ENCODE measurements at regions of chr16 and their contacts with region 1.

Region 1: DNA sequence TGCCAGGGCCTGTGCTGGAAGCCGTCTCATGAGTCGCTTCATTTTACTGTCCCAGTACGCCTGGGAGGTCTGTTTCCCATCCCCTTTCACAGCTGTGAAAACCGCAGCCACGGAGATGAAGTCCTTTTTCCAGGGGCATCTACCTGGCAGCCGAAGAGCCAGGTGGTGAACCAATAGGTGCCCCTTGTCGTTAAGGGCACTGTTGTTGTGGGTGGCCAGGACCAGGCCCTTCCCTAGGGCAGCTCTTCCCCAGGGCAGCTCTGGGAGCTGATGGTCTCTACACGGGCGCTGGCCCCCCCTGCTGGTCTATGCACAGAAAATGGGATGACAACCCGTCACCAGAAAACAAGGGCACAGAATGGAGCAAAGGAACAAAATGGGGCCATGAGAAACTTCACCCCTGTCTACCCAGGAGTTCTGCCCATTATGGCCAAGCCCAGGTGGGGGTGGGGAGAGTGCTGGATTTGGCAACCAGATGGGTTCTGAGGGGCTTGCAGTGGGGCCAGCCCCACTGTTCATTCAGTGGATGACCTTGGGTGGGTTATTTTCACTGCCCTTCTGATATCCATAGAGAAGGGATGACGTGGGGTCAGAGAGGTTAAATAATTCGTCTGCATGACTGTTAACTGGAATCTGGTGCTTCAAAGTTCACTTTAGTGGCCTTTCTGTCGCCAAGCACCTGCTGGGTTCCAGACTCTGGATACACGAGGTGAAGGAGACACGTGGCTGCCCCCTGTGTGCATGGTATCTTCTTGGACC is 11.5 kb downstream of the RMI2 start:
- DNase-seq: peak; percentile 74
- ATAC-seq: peak; percentile 35
- H3K4me3 ChIP-seq: no peak overlapping the region
- H3K4me3 Mint-ChIP-seq: peak overlapping the region; percentile 16
- H3K27ac ChIP-seq: no peak overlapping the region
- H3K27ac Mint-ChIP-seq: peak overlapping the region; percentile 37
- H3K4me1 ChIP-seq: peaks cover 42 to 45% of the 10 kb centered on the region in 2 donors
- H3K4me1 Mint-ChIP-seq: peaks cover 53% of the 10 kb centered on the region
- H3K27me3 ChIP-seq: peaks cover 0 to 45% (median 25%) of the 10 kb centered on the region in 4 experiments
- H3K27me3 Mint-ChIP-seq: peaks cover 30% of the 10 kb centered on the region
- CTCF ChIP-seq: peak; percentile 68

Region 2: DNA sequence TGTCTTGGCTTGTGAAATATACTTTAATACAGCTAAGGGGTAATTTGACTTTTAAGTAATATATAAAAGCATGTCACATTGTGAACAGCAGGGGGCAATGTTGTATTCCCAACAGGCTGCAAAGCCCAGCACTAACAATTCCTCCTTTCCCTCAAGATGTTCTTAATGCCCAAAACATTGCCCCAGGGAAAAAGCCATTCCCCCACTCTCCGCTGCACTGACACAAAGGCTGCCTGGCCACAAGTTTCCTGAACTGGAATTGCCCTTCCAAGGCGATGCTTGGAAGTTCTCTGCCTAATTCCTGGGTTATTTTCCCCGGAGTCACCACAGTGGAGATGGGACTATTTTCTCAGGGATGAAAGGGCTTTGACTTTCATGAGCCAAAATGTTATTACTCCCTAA is 385.2 kb before region 1 on chr16:
- CTCF ChIA-PET with region 1: interaction called, 47 read pairs
- POLR2A ChIA-PET with region 1: interaction called, 6 read pairs
- intact Hi-C with region 1: loop called (anchors 1 kb)
- DNase-seq: peak; percentile 64
- ATAC-seq: peak; percentile 39
- H3K4me3 ChIP-seq: no peak overlapping the region
- H3K4me3 Mint-ChIP-seq: no peak overlapping the region
- H3K27ac ChIP-seq: no peak overlapping the region
- H3K27ac Mint-ChIP-seq: no peak overlapping the region
- H3K4me1 ChIP-seq: no peaks in the 10 kb centered on the region
- H3K4me1 Mint-ChIP-seq: peaks cover 6% of the 10 kb centered on the region
- H3K27me3 ChIP-seq: no peaks in the 10 kb centered on the region
- H3K27me3 Mint-ChIP-seq: no peaks in the 10 kb centered on the region
- CTCF ChIP-seq: peak; percentile 89

Region 3: DNA sequence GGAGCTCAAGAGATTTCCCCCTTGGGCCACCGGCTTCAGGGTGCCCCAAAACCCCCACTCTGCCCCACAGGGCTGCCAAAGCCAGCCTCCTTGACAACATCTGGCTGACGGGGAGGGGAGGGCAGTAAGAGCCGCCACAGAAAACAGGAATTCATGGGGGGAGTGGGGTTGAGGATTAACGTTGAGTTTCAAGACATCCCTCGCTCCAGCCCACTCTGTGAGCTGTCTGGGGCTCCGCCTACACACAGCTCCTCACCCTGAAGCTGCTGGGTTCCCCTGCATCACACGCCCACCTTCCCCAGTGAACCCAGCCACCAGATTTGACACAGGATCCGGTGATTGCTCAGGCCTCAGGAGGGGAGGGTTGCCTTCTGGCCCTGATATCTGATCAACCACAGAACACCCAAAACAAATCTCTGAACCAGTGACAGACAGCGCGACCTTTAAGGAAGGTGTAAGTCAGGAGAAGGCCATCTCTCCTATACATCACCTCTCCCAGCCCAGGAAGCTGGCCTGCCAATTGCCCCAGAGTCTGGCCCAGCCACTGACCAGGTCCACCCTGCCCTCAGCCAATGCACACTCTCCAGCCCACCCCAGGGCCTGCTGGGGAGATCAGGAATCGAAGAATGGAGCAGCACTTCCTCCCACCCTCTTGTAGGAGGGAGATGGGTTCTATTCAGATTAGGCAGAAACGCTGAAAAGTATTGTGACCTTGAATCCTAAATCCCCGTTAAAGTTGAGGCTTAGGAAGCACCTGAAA is 280.3 kb before region 1 on chr16:
- CTCF ChIA-PET with region 1: interaction called, 6 read pairs
- POLR2A ChIA-PET with region 1: no interaction called
- intact Hi-C with region 1: loop called (anchors 10 kb)
- DNase-seq: peak; percentile 44
- ATAC-seq: peak; percentile 70
- H3K4me3 ChIP-seq: no peak overlapping the region
- H3K4me3 Mint-ChIP-seq: peak overlapping the region; percentile 81
- H3K27ac ChIP-seq: peak overlapping the region; percentile 63 to 64
- H3K27ac Mint-ChIP-seq: peak overlapping the region; percentile 97
- H3K4me1 ChIP-seq: peaks cover 53 to 57% of the 10 kb centered on the region in 2 donors
- H3K4me1 Mint-ChIP-seq: peaks cover 77% of the 10 kb centered on the region
- H3K27me3 ChIP-seq: no peaks in the 10 kb centered on the region
- H3K27me3 Mint-ChIP-seq: no peaks in the 10 kb centered on the region
- CTCF ChIP-seq: no peak

Region 4: DNA sequence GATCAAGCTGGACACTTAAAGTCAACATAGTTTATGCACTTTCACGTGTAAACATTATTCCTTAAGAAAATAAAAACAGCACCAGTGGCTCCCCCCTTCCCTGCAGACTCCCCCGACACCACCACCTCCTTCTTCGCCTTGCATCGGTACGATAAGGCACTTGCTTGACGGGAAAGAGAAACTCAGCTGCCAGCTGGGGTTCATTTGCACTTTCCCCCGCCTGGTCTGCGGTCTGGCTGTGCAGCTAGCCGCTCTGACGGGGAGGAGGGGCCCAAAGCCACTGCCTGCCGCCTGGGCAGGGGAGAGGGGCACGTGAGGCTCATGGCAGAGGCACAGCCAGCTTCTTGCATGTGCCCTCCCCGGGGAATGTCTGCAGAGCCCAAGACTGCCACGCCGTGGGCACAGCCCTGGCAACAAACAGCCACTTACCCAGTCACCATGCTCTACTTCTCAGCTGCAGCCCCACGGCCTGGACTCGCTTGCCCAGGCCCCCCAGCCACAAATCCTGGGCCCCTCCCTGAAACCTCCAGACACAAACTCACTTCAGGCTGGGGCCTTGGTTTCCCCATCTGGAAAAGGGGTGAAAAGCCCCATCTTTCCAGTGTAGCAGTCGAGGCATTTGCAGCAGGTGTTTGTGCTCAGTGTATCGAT is 59.1 kb before region 1 on chr16:
- CTCF ChIA-PET with region 1: interaction called, 120 read pairs
- POLR2A ChIA-PET with region 1: interaction called, 15 read pairs
- intact Hi-C with region 1: loop called (anchors 1 kb)
- DNase-seq: peak; percentile 95
- ATAC-seq: peak; percentile 97
- H3K4me3 ChIP-seq: peak overlapping the region in 4 of 5 experiments; percentile 0 to 41 (median 25)
- H3K4me3 Mint-ChIP-seq: peak overlapping the region; percentile 67
- H3K27ac ChIP-seq: peak overlapping the region; percentile 67 to 73
- H3K27ac Mint-ChIP-seq: peak overlapping the region; percentile 93
- H3K4me1 ChIP-seq: peaks cover 61 to 66% of the 10 kb centered on the region in 2 donors
- H3K4me1 Mint-ChIP-seq: peaks cover 71% of the 10 kb centered on the region
- H3K27me3 ChIP-seq: peaks cover 0 to 4% (median 0%) of the 10 kb centered on the region in 4 experiments
- H3K27me3 Mint-ChIP-seq: no peaks in the 10 kb centered on the region
- CTCF ChIP-seq: peak; percentile 35

Region 5: DNA sequence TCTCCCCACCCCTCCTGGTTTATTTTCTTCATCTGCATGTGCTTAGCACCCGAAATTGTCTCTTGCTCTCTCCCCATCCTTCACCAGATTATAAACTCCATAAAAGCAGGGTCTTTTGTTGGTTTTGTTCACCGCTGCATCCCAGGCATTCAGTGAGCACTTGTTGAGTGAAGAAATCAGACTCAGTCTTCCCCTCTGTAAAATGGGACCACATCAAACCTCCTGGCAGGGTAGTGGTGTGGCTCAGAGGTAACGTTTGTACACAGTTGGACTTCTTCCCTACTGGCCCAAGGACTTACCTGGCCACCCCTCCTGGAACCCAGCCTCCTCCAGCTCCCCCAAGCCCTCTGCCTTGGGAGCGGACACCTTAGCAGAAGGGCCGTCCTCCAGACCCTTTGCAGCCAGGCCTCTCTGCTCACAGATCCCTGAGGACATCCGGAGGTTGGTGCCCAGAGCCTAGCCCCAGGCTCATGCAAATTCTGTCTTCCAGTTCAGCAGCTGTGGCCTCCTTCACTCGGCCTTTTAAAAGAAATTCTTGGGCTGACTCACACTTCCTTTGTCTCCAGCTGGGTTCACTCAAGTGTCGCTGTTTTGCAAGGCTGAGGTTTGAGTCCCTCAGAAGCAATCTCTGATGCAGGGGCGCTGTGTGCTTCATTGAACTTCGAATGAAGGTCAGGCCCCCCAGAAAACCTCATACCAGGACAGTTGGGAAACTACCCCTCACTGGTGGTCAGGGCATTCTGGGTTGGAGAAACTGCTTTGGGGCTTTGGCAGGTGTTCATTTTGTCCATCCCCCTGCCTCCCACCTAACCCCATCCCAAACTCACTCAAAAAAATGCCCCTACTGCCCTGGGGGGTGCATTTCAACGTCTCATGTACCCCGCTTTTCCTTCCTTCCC is 28.3 kb before region 1 on chr16:
- CTCF ChIA-PET with region 1: interaction called, 14 read pairs
- POLR2A ChIA-PET with region 1: interaction called, 8 read pairs
- intact Hi-C with region 1: loop called (anchors 1 kb)
- DNase-seq: peak; percentile 90
- ATAC-seq: peak; percentile 70
- H3K4me3 ChIP-seq: peak overlapping the region in 4 of 5 experiments; percentile 30 to 64 (median 36)
- H3K4me3 Mint-ChIP-seq: peak overlapping the region; percentile 81
- H3K27ac ChIP-seq: peak overlapping the region; percentile 91 to 94
- H3K27ac Mint-ChIP-seq: peak overlapping the region; percentile 93
- H3K4me1 ChIP-seq: peaks cover 59 to 69% of the 10 kb centered on the region in 2 donors
- H3K4me1 Mint-ChIP-seq: peaks cover 62% of the 10 kb centered on the region
- H3K27me3 ChIP-seq: no peaks in the 10 kb centered on the region
- H3K27me3 Mint-ChIP-seq: no peaks in the 10 kb centered on the region
- CTCF ChIP-seq: no peak

Region 6: GRCh38 chr16:11370084-11370931 is 13.6 kb after region 1 on chr16:
- CTCF ChIA-PET with region 1: interaction called, 18 read pairs
- POLR2A ChIA-PET with region 1: interaction called, 7 read pairs
- intact Hi-C with region 1: loop called (anchors 1 kb)
- DNase-seq: peak; percentile 93
- ATAC-seq: peak; percentile 98
- H3K4me3 ChIP-seq: no peak overlapping the region
- H3K4me3 Mint-ChIP-seq: peak overlapping the region; percentile 62
- H3K27ac ChIP-seq: peak overlapping the region; percentile 44 to 56
- H3K27ac Mint-ChIP-seq: peak overlapping the region; percentile 71
- H3K4me1 ChIP-seq: peaks cover 23 to 26% of the 10 kb centered on the region in 2 donors
- H3K4me1 Mint-ChIP-seq: peaks cover 35% of the 10 kb centered on the region
- H3K27me3 ChIP-seq: no peaks in the 10 kb centered on the region
- H3K27me3 Mint-ChIP-seq: no peaks in the 10 kb centered on the region
- CTCF ChIP-seq: no peak